ENCODE measurements at regions of chr3 and their contacts with region 1.

Region 1: DNA sequence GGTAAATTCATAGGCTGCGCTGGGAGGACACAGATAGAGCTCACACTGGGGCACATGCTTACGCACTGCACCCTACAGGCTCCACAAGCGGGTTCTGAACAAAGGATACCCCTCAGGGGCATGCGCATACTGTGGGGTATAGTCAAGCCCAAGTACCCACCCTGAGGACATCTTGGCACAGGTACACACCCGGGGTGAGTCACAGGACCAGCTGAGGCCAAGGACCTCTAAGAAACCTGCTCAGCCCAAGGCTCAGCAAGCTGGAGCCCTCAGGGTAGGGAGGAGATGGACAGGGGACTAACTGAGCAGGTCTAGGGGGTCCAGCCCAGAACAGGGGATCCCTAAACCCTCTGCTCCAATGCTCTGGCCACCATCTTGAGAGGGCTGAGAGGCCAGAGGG is 3.3 kb downstream of the SHISA5 start:
- DNase-seq: no peak
- H3K4me3 Mint-ChIP-seq: no peak overlapping the region
- H3K27ac Mint-ChIP-seq: peak overlapping the region; percentile 43
- H3K4me1 Mint-ChIP-seq: peaks cover 36% of the 10 kb centered on the region
- H3K27me3 Mint-ChIP-seq: no peaks in the 10 kb centered on the region

Region 2: DNA sequence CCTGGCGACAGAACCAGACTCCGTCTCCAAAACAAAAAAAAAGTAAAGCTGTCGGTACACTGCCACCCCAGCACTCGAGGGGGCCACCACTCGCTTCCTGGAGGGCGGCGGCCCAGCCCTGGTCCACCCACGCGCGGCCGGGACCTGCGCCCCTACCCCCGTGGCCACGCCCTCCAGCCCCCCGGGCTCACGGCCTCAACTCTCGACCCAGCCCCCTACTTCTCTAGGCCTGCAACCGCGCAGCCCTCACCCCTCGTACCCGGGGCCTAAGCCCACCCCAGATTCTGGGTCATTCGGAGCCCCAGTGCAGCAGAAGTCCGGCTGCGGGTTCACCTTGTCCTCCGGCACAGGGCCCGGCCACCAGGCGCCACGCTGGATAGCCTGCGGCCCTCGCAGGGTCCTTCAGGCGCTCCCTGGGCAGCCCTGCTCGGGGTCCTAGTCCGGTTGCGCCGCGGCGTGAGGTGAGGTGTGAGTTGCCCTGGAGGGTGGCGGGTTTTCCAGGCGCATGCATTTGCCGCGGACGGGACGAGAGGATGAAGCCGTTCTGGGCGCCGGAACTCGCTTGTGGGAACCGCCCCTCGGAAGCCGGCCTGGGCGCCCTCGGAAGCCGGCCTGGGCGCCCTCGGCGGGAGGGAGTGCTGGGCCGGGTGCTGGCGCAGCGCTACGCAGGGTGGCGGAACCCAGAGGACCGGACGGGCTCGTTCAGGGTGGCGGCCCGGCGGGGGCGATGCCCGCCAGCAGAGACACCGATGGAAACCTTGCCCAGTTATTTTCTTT is 199.4 kb before region 1 on chr3:
- intact Hi-C with region 1: no loop called
- DNase-seq: peak; percentile 97
- H3K4me3 Mint-ChIP-seq: peak within 1 kb of the TSS; percentile 96
- H3K27ac Mint-ChIP-seq: peak within 1 kb of the TSS; percentile 99
- H3K4me1 Mint-ChIP-seq: peaks cover 23% of the 10 kb centered on the region
- H3K27me3 Mint-ChIP-seq: peaks cover 14% of the 10 kb centered on the region

Region 3: DNA sequence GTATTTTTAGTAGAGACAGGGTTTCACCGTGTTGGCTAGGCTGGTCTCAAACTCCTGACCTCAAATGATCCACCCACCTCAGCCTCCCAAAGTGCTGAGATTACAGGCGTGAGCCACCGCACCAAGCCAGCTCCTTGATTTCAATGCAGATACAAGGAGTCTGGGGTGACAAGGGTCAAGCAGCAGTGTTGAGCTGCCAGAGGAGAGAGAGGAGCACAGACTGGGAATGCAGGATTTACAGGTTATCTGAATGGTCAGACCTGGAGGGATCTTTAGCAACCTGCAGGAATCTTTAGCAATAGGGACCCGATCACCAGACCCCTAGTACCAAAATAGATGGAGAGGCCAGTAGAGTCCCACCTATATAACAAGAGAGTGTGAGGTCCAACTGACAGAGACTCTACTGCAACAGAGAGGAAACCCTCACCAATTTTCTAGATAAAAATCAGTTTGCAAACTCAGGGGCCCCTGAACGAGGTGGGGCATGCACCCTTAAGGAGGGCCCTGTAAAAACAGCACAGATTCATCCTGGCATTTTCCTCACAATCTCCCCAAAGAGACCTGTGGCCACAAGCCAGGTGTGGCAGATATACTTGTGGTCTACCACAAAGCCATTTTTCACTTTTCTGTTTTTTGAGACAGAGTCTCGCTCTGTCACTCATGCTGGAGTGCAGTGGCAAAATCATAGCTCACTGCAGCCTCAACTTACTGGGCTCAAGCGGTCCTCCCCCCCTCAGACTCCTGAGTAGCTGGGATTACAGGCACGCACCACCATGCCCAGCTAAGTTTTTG is 14.0 kb after region 1 on chr3:
- intact Hi-C with region 1: loop called (anchors 1 kb)
- DNase-seq: peak; percentile 88
- H3K4me3 Mint-ChIP-seq: peak overlapping the region; percentile 52
- H3K27ac Mint-ChIP-seq: peak overlapping the region; percentile 41
- H3K4me1 Mint-ChIP-seq: peaks cover 55% of the 10 kb centered on the region
- H3K27me3 Mint-ChIP-seq: no peaks in the 10 kb centered on the region